ENCODE measurements at regions of chr15 and their contacts with region 1.

Region 1: GRCh38 chr15:77633134-77633912 is 611 bp upstream of the LINGO1 start:
- DNase-seq: peak; percentile 97
- H3K4me3 ChIP-seq: peak overlapping the region; percentile 47 to 66
- H3K27ac ChIP-seq: peak overlapping the region in 1 of 2 experiments; percentile 11; a peak in 1 of 4 replicates
- H3K4me1 ChIP-seq: peaks cover 0 to 40% of the 10 kb centered on the region in 2 experiments; a peak in 2 of 4 replicates
- H3K27me3 ChIP-seq: peaks cover 56% of the 10 kb centered on the region
- CTCF ChIP-seq: peak; percentile 98
- EP300 ChIP-seq: no peak
- RAD21 ChIP-seq: peak; percentile 85

Region 2: DNA sequence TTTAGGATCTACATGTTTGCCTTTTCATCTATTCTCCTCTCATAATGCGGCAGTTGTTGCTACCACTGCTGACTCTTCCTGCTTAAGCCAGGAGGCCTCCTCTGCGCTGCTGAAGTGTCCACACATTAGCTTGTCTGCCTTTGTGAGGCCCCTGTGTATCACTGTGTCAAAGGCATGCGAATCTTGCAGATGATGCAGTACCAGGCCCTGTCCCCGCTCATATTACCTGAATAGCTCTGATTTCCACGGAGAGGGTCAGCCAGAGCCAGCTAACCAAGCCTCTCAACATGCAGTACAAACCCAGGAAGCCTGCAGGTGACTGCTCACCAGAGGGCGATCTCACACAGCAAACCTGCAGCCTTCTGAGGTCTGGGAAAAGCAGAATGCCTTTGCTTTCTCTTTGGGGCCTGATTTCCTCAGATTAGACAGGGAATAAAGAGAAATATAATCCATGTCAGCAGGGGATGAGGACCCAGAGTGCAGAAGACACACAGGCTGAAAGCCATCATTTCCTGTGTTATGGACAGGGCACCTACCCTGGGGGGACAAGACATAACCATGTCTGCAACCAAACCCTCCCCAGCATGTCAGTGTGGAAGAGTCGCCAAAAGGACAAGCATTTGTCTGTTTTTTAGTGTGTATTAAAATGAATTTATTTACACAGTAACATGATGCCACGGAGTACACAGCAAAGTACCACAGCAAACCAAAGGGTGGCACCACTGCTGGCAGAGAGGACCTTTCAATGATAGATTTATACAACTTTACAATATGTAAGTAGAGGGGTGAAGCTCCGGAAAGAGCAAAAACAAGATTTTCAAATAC is 525.6 kb before region 1 on chr15:
- CTCF ChIA-PET with region 1: interaction called, 18 read pairs
- POLR2A ChIA-PET with region 1: no interaction called
- DNase-seq: peak; percentile 72
- H3K4me3 ChIP-seq: no peak overlapping the region
- H3K27ac ChIP-seq: peak overlapping the region in 1 of 2 experiments; percentile 22; a peak in 1 of 4 replicates
- H3K4me1 ChIP-seq: peaks cover 0 to 17% of the 10 kb centered on the region in 2 experiments; a peak in 2 of 4 replicates
- H3K27me3 ChIP-seq: no peaks in the 10 kb centered on the region
- CTCF ChIP-seq: peak; percentile 68
- EP300 ChIP-seq: no peak
- RAD21 ChIP-seq: peak; percentile 89

Region 3: DNA sequence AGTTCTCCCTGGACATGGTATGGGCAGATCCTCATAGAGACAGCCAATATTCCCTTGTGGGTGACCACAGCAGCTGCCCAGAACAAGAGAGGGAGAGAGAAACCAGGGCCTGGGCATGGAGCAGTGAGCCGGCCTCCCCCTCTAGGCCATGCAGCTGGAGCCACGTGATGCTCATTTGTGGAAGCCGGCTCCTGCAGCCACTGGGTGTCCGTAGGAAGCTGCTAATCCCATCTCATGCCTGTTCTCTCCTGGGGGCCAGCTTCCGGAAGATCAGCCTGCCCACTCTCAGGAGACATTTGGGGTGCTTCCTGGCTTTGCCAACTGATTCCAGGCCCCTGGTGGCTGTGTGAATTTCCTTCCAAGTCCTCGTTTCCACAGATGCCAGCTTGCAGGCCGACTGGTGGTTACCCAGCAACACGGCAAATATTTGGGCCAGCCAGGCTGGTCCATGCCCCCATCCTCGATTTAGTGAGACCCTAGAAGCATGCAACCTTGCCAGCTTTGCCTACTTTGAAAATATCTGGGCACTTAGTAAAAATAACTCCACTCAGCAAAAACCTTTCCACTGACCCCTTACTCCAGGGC is 55.9 kb before region 1 on chr15:
- CTCF ChIA-PET with region 1: interaction called, 14 read pairs
- POLR2A ChIA-PET with region 1: no interaction called
- DNase-seq: peak; percentile 71
- H3K4me3 ChIP-seq: no peak overlapping the region
- H3K27ac ChIP-seq: peak overlapping the region in 1 of 2 experiments; percentile 4; a peak in 1 of 4 replicates
- H3K4me1 ChIP-seq: peaks cover 0 to 32% of the 10 kb centered on the region in 2 experiments; a peak in 2 of 4 replicates
- H3K27me3 ChIP-seq: no peaks in the 10 kb centered on the region; the same call in 1 of the 2 replicates
- CTCF ChIP-seq: no peak
- EP300 ChIP-seq: no peak
- RAD21 ChIP-seq: no peak

Region 4: GRCh38 chr15:77617476-77618230 is 15.7 kb before region 1 on chr15:
- CTCF ChIA-PET with region 1: interaction called, 44 read pairs
- POLR2A ChIA-PET with region 1: no interaction called
- DNase-seq: no peak
- H3K4me3 ChIP-seq: no peak overlapping the region
- H3K27ac ChIP-seq: no peak overlapping the region
- H3K4me1 ChIP-seq: peaks cover 0 to 13% of the 10 kb centered on the region in 2 experiments; a peak in 1 of 4 replicates
- H3K27me3 ChIP-seq: no peaks in the 10 kb centered on the region
- CTCF ChIP-seq: peak; percentile 47
- EP300 ChIP-seq: no peak
- RAD21 ChIP-seq: no peak

Region 5: DNA sequence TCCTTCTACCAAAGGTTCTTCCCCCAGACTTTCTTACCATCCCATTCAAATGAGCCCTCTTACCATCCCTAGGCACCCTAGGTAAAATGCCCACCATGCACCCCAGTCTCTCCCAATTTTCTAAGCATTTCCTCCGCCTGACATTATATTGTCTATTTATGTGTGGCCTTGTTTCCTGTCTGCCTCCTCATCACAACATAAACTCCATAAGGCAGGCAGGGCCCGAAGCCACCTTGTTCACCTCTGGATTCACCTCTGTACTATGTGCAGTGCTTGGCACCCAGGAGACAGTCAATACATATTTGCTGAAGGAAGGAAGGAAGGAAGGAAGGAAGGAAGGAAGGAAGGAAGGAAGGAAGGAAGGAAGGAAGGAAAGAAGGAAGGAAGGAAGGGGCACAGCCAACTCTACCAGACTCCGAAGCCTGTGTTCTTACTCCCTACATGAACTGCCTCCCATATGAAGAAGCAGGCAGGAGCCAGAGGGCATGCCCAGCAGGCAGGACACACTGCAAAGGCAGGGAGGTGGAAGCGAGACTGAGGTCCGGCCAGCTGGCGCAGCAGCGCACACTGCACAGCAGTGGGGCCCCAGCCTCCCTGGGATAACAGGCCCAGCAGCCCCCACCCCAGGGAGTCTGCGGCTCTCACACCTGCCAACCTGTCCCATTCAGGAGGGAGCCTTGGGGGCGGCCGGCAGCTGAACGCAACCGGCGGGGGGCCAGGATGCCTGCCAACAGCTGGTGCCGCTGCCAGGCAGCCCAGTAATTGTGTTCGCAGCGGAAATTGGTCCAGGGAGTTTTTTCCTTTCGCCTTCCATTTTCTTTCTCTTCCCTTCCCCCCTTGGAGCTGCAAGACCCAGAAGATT is 105.3 kb after region 1 on chr15:
- CTCF ChIA-PET with region 1: interaction called, 10 read pairs
- POLR2A ChIA-PET with region 1: no interaction called
- DNase-seq: no peak
- H3K4me3 ChIP-seq: no peak overlapping the region
- H3K27ac ChIP-seq: no peak overlapping the region
- H3K4me1 ChIP-seq: peaks cover 0 to 5% of the 10 kb centered on the region in 2 experiments; a peak in 2 of 4 replicates
- H3K27me3 ChIP-seq: peaks cover 28% of the 10 kb centered on the region
- CTCF ChIP-seq: no peak
- EP300 ChIP-seq: no peak
- RAD21 ChIP-seq: no peak

Region 6: DNA sequence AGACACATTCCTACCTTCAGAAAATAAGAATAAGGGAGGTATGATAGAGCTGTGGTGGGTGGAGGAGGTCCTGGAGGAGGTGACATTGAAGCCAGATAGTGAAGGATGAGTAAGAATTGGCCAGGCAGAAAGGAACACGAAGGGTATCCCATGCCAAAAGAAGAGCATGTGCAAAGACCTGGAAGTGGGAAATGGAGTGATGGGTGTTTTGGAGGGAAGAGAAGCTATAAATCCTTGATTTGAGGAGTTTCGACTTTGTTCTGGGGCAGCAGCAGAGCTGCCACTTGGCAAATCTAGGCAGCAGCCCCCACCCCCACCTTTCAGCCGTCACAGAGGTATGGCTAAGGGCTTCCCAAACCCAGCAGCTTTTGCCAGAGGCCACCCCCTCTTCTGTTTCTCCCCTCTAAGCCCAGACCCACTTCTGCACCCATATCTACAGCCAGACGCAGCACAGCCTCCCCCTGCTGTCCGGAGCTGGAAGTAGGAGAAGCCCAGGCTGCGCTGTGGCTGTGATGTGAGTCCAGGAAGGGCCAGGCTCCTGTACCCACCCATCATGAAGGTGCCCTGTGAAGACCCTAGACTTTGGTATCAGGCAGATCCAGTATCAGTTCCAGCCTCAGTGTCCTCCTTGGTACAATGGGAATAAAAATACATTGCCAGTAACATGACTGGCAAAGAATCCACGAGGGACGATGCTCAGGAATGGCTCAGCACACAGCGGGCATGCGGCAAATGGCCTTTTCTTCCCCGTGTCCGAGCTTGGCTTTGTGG is 188.1 kb after region 1 on chr15:
- CTCF ChIA-PET with region 1: interaction called, 458 read pairs
- POLR2A ChIA-PET with region 1: no interaction called
- DNase-seq: peak; percentile 88
- H3K4me3 ChIP-seq: no peak overlapping the region; a peak in 1 of 4 replicates
- H3K27ac ChIP-seq: no peak overlapping the region
- H3K4me1 ChIP-seq: peaks cover 0 to 17% of the 10 kb centered on the region in 2 experiments; a peak in 1 of 4 replicates
- H3K27me3 ChIP-seq: peaks cover 38% of the 10 kb centered on the region
- CTCF ChIP-seq: peak; percentile 80
- EP300 ChIP-seq: no peak
- RAD21 ChIP-seq: peak; percentile 92

Region 7: GRCh38 chr15:77864278-77865078 is 231.2 kb after region 1 on chr15:
- CTCF ChIA-PET with region 1: interaction called, 11 read pairs
- POLR2A ChIA-PET with region 1: no interaction called
- DNase-seq: no peak
- H3K4me3 ChIP-seq: no peak overlapping the region
- H3K27ac ChIP-seq: no peak overlapping the region
- H3K4me1 ChIP-seq: peaks cover 0 to 7% of the 10 kb centered on the region in 2 experiments; a peak in 3 of 4 replicates
- H3K27me3 ChIP-seq: no peaks in the 10 kb centered on the region
- CTCF ChIP-seq: no peak
- EP300 ChIP-seq: no peak
- RAD21 ChIP-seq: no peak

Region 8: DNA sequence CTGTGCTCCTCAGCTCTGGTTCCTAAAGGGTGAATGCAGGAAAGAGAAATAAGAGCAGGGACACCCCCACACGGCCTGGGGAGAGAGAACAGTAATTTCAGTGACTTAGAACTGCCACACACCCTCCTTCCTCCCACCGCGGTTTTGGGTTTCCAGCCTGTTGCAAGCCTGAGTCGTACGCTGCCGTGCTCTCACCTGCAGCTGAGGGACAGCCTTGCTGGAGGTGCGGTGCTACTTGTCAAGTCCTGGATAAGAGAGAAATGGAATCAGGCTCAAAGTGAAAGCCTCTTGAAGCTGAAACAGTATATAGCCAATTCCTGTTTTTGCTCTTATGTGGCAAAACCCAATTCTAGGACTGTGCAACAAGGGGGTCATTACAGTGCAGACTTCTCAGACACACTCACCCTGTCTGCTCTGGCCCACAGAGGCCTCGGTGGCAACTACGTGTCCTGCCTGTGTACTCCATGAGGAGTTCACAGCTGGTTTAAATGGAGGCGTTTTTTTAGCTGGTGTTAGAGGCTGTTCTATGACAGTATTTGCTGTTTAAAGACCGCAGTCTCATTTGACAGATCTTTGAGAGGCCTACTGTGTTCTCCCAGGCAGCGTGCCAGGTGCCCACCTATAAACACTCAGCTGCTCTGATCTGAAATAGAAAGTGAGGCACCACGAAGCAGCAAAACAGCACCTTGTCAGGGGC is 401.3 kb after region 1 on chr15:
- CTCF ChIA-PET with region 1: no interaction called
- POLR2A ChIA-PET with region 1: no interaction called
- DNase-seq: no peak
- H3K4me3 ChIP-seq: no peak overlapping the region
- H3K27ac ChIP-seq: no peak overlapping the region
- H3K4me1 ChIP-seq: peaks cover 4 to 5% of the 10 kb centered on the region in 2 experiments; a peak in 1 of 4 replicates
- H3K27me3 ChIP-seq: no peaks in the 10 kb centered on the region
- CTCF ChIP-seq: no peak
- EP300 ChIP-seq: no peak
- RAD21 ChIP-seq: no peak

Measured in SK-N-SH (cell line).